Kidney (tissue), 22 donors: ENCODE measurements at regions of chr3 and their contacts with region 1.

Region 1: GRCh38 chr3:139427283-139427993 is 38.0 kb upstream of the COPB2 start:
- DNase-seq: peak in 2 of 5 donors; percentile 89 to 91
- H3K4me3 ChIP-seq: no peak overlapping the region
- H3K27ac ChIP-seq: no peak overlapping the region
- H3K4me1 ChIP-seq: no peaks in the 10 kb centered on the region
- H3K27me3 ChIP-seq: no peaks in the 10 kb centered on the region
- CTCF ChIP-seq: peak; percentile 89

Region 2: GRCh38 chr3:139310474-139310933 is 116.9 kb before region 1 on chr3:
- intact Hi-C with region 1: no loop called
- DNase-seq: no peak
- H3K4me3 ChIP-seq: no peak overlapping the region
- H3K27ac ChIP-seq: no peak overlapping the region
- H3K4me1 ChIP-seq: no peaks in the 10 kb centered on the region
- H3K27me3 ChIP-seq: no peaks in the 10 kb centered on the region
- CTCF ChIP-seq: no peak

Region 3: GRCh38 chr3:140863580-140864009 is 1436.2 kb after region 1 on chr3:
- intact Hi-C with region 1: loop called (anchors 10 kb)
- DNase-seq: peak in 4 of 5 donors; percentile 54 to 85 (median 73)
- H3K4me3 ChIP-seq: no peak overlapping the region
- H3K27ac ChIP-seq: no peak overlapping the region
- H3K4me1 ChIP-seq: peaks cover 0 to 4% (median 2%) of the 10 kb centered on the region in 3 donors
- H3K27me3 ChIP-seq: no peaks in the 10 kb centered on the region
- CTCF ChIP-seq: peak; percentile 52